Colonic mucosa (tissue), 4 donors: ENCODE measurements at regions of chr10 and their contacts with region 1.

Region 1: GRCh38 chr10:74145133-74145532 is 5.5 kb downstream of the AP3M1 start:
- DNase-seq: no peak
- H3K4me3 ChIP-seq: no peak overlapping the region
- H3K27ac ChIP-seq: no peak overlapping the region
- H3K4me1 ChIP-seq: peaks cover 7% of the 10 kb centered on the region
- H3K27me3 ChIP-seq: no peaks in the 10 kb centered on the region
- CTCF ChIP-seq: no peak

Region 2: GRCh38 chr10:74234569-74234968 is 89.4 kb after region 1 on chr10:
- intact Hi-C with region 1: loop called (anchors 10 kb)
- DNase-seq: no peak
- H3K4me3 ChIP-seq: no peak overlapping the region
- H3K27ac ChIP-seq: no peak overlapping the region
- H3K4me1 ChIP-seq: no peaks in the 10 kb centered on the region
- H3K27me3 ChIP-seq: no peaks in the 10 kb centered on the region
- CTCF ChIP-seq: peak; percentile 17